HepG2 (cell line): ENCODE measurements at regions of chr1 and their contacts with region 1.

Region 1: DNA sequence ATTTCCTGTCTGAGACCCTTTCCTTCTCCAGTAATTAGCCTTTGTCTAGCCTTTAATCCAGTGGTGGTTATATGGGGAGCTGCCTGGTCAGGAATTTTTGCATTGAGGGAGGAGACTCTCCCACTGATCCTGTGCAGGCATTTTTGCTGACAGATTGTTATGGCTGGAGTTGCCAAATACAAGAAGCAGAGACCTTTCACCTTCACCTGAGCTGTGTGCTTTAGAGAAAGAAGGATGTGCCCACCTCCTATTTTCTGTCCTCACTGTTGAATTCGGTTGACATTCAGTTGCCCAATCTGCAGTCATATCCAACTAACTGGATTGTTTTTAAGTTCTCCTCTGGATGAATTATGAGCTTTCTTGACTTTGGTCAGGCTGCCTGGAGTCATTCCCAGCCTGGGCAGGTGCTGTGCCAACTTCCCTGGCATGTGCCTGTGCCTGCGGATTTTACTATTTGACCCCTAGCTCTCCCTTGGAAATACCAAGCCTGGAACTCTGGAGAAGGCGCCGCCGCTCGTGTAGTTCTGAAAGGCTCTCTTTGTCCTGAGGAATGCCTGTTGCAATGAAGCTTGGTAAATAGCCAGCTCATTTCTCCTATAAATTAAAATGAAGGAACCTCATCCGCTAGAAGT is 143.9 kb downstream of the NOS1AP start:
- DNase-seq: peak; percentile 86
- ATAC-seq: peak; percentile 77
- H3K4me3 ChIP-seq: peak overlapping the region in 1 of 3 experiments; percentile 7; a peak in 1 of 6 replicates
- H3K27ac ChIP-seq: peak overlapping the region; percentile 39
- H3K4me1 ChIP-seq: peaks cover 33% of the 10 kb centered on the region
- H3K27me3 ChIP-seq: no peaks in the 10 kb centered on the region
- CTCF ChIP-seq: no peak
- EP300 ChIP-seq: no peak
- POLR2A ChIP-seq: no peak
- RAD21 ChIP-seq: no peak

Region 2: GRCh38 chr1:162248854-162249535 is 35.6 kb after region 1 on chr1:
- CTCF ChIA-PET with region 1: no interaction called
- POLR2A ChIA-PET with region 1: no interaction called
- in situ Hi-C with region 1: no loop called
- intact Hi-C with region 1: loop called (anchors 2 kb)
- DNase-seq: no peak
- ATAC-seq: no peak
- H3K4me3 ChIP-seq: no peak overlapping the region
- H3K27ac ChIP-seq: peak overlapping the region; percentile 88
- H3K4me1 ChIP-seq: peaks cover 77% of the 10 kb centered on the region
- H3K27me3 ChIP-seq: no peaks in the 10 kb centered on the region
- CTCF ChIP-seq: no peak
- EP300 ChIP-seq: no peak
- POLR2A ChIP-seq: no peak
- RAD21 ChIP-seq: no peak